ENCODE measurements at regions of chr12 and their contacts with region 1.

Region 1: DNA sequence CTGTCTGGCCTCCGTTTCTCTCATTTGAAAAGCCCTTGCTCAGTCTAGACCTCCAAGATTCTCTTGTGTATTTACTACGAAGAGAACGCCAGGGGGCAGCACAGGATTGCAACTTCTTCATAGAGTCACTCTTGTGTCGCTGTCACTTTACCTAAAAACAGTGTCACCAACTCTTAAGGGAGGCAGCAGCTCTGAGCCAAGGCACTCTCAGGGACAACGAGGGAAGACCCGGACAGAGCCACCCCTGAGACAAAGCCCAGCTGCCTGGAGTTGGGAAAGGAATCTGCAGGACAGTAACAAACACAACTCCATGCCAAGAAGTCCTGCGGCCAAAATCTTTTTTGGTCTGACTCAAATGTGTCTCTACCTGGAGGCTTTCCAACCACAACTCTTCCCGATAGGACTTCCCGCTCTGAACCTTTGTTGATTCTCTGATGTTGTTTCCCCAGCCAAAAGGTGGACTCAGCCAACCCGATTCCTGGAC is 9.6 kb upstream of the RPAP3 start:
- DNase-seq: peak; percentile 91
- ATAC-seq: peak; percentile 86
- H3K4me3 Mint-ChIP-seq: no peak overlapping the region
- H3K27ac Mint-ChIP-seq: no peak overlapping the region
- H3K4me1 Mint-ChIP-seq: peaks cover 18% of the 10 kb centered on the region
- H3K27me3 Mint-ChIP-seq: no peaks in the 10 kb centered on the region

Region 2: DNA sequence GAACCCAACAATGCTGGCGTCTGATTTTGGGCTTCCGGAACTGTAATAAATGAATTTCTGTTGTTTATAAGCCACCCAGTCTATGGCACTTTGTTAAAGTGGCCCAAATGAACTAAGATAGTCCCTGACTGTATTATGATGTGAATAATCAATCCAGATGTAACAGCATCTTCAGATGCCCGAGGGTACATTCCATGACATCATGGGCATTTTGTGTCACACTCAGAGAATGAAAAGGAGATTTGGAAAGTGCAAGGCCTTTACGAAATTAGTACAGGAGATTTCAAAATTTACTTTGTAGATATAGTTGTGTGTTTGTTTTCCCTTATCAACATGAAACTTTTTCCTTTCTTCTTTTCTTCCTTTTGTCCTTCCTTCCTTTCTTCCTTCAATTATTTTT is 581.5 kb before region 1 on chr12:
- CTCF ChIA-PET with region 1: no interaction called
- POLR2A ChIA-PET with region 1: no interaction called
- intact Hi-C with region 1: no loop called
- DNase-seq: peak; percentile 35
- ATAC-seq: no peak
- H3K4me3 Mint-ChIP-seq: no peak overlapping the region
- H3K27ac Mint-ChIP-seq: peak overlapping the region; percentile 68
- H3K4me1 Mint-ChIP-seq: peaks cover 8% of the 10 kb centered on the region
- H3K27me3 Mint-ChIP-seq: no peaks in the 10 kb centered on the region

Region 3: GRCh38 chr12:47742253-47742825 is 26.9 kb after region 1 on chr12:
- CTCF ChIA-PET with region 1: interaction called, 63 read pairs
- POLR2A ChIA-PET with region 1: no interaction called
- intact Hi-C with region 1: loop called (anchors 1 to 2 kb)
- DNase-seq: peak; percentile 88
- ATAC-seq: peak; percentile 59
- H3K4me3 Mint-ChIP-seq: no peak overlapping the region
- H3K27ac Mint-ChIP-seq: no peak overlapping the region
- H3K4me1 Mint-ChIP-seq: peaks cover 17% of the 10 kb centered on the region
- H3K27me3 Mint-ChIP-seq: peaks cover 2% of the 10 kb centered on the region

Region 4: DNA sequence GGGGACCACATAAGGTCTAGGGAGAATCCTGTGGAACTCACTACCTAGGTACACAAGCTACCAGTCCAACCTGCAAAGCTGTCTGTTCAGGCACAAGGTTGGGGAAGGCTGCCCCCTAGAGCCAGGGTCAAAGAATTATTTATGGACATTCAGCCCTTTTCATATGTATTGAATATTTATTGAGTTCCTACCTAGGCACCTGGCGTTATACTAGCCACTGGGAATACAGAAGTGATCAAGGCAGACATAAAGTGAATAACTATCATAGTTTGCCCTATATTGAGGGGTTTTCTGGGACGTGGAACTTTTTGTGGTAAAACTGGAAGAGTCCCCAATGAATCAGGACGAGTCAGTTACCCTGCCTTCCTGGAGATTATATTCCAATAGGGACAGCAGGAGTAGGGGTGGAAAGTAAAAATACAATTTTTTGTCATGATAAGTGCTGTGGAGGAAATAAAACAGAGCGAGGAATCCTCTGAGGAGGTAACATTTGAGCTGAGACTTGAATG is 51.8 kb after region 1 on chr12:
- CTCF ChIA-PET with region 1: interaction called, 341 read pairs
- POLR2A ChIA-PET with region 1: no interaction called
- intact Hi-C with region 1: loop called (anchors 1 kb)
- DNase-seq: peak; percentile 88
- ATAC-seq: peak; percentile 89
- H3K4me3 Mint-ChIP-seq: no peak overlapping the region
- H3K27ac Mint-ChIP-seq: no peak overlapping the region
- H3K4me1 Mint-ChIP-seq: no peaks in the 10 kb centered on the region
- H3K27me3 Mint-ChIP-seq: peaks cover 4% of the 10 kb centered on the region

Region 5: DNA sequence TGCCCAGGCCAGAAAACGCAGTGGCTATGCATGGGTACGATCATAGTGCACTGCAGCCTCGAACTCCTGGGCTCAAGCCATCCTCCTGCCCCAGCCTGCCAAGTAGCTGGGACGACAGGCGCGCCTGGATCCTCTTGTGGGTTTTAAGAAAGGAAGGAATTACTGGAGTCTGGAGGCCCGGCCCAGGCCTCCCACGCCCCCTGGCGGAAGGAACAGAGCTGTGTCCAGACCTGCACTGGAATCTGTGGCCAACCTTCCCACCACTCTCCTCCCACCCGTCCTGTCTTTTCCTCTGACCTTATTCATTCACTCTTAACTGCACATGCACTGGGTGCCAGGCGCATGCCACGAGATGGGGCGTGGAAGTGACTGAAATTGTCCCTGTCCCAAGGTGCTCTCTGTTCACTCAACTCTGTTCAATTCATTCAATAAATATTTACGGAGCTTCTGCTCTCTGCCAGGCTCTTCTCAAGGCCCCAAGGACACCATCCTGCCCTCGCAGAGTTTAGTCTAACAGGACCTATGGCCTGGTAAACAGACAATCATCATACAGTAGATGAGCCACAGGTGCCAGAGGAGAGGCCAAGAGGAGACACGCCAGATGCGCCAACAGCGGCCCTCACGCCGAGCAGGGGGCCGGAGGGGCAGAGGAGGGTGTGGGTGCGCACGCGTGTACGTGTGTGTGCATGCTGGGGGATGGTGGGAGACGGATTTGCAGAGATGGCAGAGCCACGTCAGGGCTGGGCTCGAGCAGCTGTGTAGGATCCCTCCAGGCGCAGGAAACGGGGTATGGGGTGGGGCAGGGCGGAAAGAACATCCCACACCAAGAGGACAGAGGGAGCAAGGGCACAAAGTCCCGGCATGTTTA is 234.2 kb after region 1 on chr12:
- CTCF ChIA-PET with region 1: interaction called, 4 read pairs
- POLR2A ChIA-PET with region 1: no interaction called
- intact Hi-C with region 1: loop called in 1 of 2 experiments (anchors 2 kb)
- DNase-seq: peak; percentile 78
- ATAC-seq: peak; percentile 83
- H3K4me3 Mint-ChIP-seq: no peak overlapping the region
- H3K27ac Mint-ChIP-seq: peak overlapping the region; percentile 10
- H3K4me1 Mint-ChIP-seq: peaks cover 10% of the 10 kb centered on the region
- H3K27me3 Mint-ChIP-seq: peaks cover 3% of the 10 kb centered on the region

Region 6: GRCh38 chr12:48189331-48190125 is 474.1 kb after region 1 on chr12:
- CTCF ChIA-PET with region 1: no interaction called
- POLR2A ChIA-PET with region 1: no interaction called
- intact Hi-C with region 1: loop called in 1 of 2 experiments (anchors 2 kb)
- DNase-seq: peak; percentile 79
- ATAC-seq: peak; percentile 81
- H3K4me3 Mint-ChIP-seq: no peak overlapping the region
- H3K27ac Mint-ChIP-seq: no peak overlapping the region
- H3K4me1 Mint-ChIP-seq: peaks cover 6% of the 10 kb centered on the region
- H3K27me3 Mint-ChIP-seq: peaks cover 26% of the 10 kb centered on the region